ENCODE measurements at regions of chr1 and their contacts with region 1.

Region 1: GRCh38 chr1:147545133-147545532 is 3.8 kb downstream of the BCL9 start:
- DNase-seq: no peak

Region 2: DNA sequence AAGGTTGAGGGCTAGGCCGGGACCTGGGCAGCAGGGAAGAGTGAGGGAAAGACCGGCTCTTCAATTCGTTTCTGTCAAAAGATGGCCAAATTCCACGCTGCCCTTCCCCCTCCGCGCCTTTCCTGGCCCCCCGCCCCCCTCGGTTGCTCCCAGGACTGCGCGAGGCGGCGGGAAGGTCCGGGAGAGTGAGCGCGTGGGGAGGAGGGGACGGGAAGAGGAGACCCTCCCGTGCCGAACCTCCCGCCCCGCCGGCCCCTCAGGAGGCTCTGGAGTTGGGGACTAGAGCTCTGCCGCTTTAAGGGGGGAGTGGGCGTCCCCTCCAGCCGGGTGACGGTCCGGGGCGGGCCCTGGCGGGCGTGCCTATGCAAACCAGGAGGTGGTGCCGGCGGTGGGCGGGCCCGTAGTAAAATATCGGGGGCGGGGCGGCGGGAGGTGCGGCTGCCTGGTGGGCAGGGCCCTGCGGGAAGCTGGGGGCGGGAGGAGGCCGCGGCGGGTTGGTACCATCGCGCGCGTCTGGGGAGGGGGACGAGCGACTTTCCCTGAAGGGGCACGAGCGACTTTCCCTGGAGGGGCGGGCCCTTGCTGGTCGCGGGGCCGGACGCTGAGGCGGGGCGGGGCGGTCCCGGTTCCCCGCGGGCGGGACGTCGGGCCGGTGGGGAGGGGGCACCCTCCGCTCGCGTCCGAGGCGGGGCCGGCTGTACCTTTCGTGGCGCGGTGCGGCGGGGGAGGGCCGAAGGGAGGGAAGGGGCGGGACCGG is 54.4 kb after region 1 on chr1:
- intact Hi-C with region 1: loop called (anchors 1 to 2 kb)
- DNase-seq: peak; percentile 100

Region 3: GRCh38 chr1:148334339-148335130 is 789.4 kb after region 1 on chr1:
- intact Hi-C with region 1: loop called in 1 of 2 experiments (anchors 5 kb)
- DNase-seq: peak; percentile 96

Measured in posterior vena cava (tissue), 2 donors.